ENCODE measurements at regions of chr1 and their contacts with region 1.

Region 1: DNA sequence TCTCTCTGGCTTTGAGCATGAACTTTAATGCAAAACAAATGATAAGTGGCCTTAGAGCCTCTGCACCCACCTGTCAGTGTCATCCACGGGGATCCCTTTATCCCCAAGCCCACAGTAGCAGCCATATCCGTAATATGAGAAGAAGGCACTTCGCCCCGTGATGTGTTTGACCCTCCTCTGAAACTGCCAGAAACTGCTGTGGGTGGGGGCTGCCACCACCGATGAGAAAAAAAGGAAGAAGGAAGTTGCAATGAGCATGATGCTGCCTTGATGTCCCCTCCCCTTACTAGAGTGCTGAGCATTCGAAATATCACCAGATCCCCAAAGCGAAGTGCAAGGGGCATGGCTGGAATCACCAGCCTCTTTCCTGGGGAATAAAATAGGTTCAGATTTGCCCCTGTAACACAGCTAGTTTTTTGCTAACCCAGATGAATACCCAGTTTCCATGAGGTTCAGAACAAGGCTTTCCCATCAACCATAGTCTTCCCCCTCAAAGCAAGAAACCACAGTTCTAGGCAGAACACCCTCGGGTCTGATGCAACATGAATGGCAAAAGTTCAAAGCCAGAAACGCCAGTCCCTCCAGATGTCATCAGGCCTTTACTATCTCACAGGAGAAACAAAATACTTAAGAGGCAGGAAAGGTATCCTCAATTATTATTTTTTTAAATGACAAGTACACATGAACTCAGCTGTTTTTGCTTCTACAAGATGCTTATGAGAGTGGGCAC is 10.8 kb upstream of the UBXN10 start:
- DNase-seq: no peak
- H3K4me3 Mint-ChIP-seq: no peak overlapping the region
- H3K27ac Mint-ChIP-seq: no peak overlapping the region
- H3K4me1 Mint-ChIP-seq: peaks cover 12% of the 10 kb centered on the region
- H3K27me3 Mint-ChIP-seq: peaks cover 8% of the 10 kb centered on the region

Region 2: GRCh38 chr1:20187103-20187812 is 12.2 kb after region 1 on chr1:
- CTCF ChIA-PET with region 1: interaction called, 11 read pairs
- POLR2A ChIA-PET with region 1: no interaction called
- DNase-seq: peak; percentile 26
- H3K4me3 Mint-ChIP-seq: peak overlapping the region; percentile 0
- H3K27ac Mint-ChIP-seq: peak overlapping the region; percentile 58
- H3K4me1 Mint-ChIP-seq: peaks cover 47% of the 10 kb centered on the region
- H3K27me3 Mint-ChIP-seq: peaks cover 33% of the 10 kb centered on the region

Region 3: GRCh38 chr1:20308569-20308968 is 133.5 kb after region 1 on chr1:
- CTCF ChIA-PET with region 1: no interaction called
- POLR2A ChIA-PET with region 1: no interaction called
- DNase-seq: no peak
- H3K4me3 Mint-ChIP-seq: no peak overlapping the region
- H3K27ac Mint-ChIP-seq: no peak overlapping the region
- H3K4me1 Mint-ChIP-seq: no peaks in the 10 kb centered on the region
- H3K27me3 Mint-ChIP-seq: peaks cover 3% of the 10 kb centered on the region

Measured in activated CD4-positive, alpha-beta T cell treated with anti-CD3 and anti-CD28 coated beads, Interleukin-2, amount 10 ng/mL, durations not matched to agents 7 days and 5 days (primary cell).